Cardiac septum (tissue), 1 donor: ENCODE measurements at regions of chr11 and their contacts with region 1.

Region 1: GRCh38 chr11:16785520-16786128 is 47.2 kb downstream of the C11orf58 start:
- DNase-seq: peak; percentile 83

Region 2: GRCh38 chr11:16685914-16686313 is 99.7 kb before region 1 on chr11:
- intact Hi-C with region 1: no loop called
- DNase-seq: no peak

Region 3: GRCh38 chr11:16804104-16804947 is 18.7 kb after region 1 on chr11:
- intact Hi-C with region 1: loop called (anchors 2 kb)
- DNase-seq: peak; percentile 74

Region 4: DNA sequence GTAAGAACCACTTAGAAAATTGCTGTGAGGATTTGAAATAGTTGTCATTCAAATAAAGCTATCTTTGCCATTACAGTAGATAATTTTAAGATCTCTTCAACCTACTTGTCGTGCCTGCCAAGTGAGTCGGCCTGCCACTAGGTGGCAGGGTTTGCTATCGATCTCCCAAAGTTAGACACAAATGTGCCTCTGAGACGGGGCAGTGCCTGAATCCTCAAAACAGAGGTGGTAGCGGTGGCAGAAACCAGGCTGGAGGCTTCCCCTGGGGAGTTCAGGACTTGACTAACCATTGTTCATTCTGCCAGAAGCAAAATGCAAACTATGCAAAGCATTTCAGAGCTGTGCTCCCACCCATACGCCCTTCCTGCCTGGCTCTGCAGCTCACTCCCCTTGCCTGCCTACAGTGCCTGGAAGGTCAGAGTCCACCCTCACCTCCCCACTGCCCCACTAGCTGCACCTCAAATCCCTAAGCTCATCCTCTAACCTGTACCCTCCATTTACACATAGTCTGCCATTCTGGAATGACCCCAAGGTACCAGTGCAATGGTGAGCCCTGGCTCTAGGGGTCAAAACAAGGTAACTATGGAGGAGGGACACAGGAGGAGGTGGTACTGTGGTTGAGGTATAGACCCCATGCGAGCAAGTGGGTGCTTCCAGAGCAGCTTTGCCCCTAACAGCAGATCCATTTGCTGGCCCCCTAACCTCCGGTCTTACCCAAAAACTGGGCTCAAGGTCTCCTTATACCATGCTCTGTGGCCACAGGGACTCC is 34.9 kb after region 1 on chr11:
- intact Hi-C with region 1: loop called (anchors 5 kb)
- DNase-seq: peak; percentile 88

Region 5: GRCh38 chr11:16881074-16881709 is 95.6 kb after region 1 on chr11:
- intact Hi-C with region 1: loop called (anchors 2 kb)
- DNase-seq: no peak

Region 6: GRCh38 chr11:16935518-16936302 is 150.1 kb after region 1 on chr11:
- intact Hi-C with region 1: loop called (anchors 5 kb)
- DNase-seq: no peak

Region 7: DNA sequence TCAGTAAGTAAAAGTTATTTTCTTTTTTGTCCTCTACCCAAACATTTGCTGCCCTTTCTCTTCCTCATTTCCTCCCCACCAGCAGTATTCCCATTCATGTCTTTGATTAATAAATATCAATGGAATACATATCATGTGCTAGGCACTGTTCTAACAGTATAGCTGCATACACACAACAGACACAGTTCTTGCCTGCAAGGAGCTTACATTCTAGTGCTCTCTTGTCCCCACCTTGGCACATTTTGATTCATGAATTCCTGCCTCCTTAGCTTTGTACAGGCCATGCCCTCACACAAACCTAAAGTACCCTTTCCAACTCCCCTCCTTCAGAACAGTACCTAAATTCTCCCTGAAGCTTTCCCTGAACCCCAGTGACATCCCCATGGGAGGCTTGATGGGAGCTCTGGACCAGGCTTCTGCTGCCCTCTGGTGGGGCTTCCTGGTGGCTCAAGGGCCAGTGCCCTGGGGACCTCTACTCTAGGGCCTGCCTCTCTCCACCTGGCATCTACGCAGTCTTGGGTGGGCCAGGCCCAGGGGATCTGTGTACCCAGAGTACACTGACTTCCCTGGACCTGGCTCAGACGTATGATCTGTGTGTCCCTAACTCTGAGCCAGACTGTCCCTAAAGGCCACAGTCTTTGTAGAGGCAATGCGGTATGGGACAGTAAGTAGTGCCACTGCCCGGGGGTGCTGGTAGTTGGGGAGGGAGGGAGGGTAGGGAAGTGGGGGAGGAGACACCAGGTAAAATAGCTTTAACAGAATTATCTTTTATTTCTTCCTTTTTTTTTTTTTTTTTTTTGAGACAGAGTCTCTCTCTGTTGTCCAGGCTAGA is 277.8 kb after region 1 on chr11:
- intact Hi-C with region 1: loop called (anchors 2 kb)
- DNase-seq: no peak